ENCODE measurements at regions of chr12 and their contacts with region 1.

Region 1: GRCh38 chr12:113048716-113049127 is 7.8 kb upstream of the DTX1 start:
- DNase-seq: no peak
- H3K4me3 ChIP-seq: no peak overlapping the region
- CTCF ChIP-seq: peak; percentile 67

Region 2: DNA sequence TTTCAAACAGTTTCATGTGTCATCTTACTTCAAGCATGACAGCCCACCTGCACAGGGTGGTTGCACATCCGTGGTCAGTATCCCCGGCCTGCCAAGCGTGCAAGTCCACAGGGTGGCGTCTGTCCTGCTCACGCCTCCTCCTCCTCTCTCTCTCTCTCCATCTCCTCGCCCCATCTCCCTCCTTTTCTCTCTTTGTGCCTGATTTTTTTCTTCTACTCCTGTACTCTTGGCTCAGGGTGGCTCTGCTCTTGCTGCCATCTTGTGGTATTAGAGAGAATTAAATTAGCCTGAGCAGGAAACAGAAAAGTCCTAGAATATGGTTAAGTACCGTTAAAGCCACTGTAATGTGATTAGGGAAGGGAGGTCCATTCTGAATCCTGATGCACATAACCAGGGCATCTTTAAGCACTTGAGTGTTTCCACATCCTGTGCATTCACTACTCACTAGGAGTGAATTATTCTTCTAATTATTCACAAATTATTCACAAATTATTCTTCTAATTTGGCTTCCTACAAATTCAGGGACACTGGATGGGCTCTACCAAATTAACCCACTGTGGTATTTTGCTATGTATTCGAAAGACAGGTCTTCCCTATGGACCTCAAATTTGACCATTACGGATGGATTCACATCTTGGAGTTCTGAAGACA is 17.7 kb before region 1 on chr12:
- CTCF ChIA-PET with region 1: interaction called, 16 read pairs
- POLR2A ChIA-PET with region 1: no interaction called
- DNase-seq: peak; percentile 9
- H3K4me3 ChIP-seq: no peak overlapping the region
- CTCF ChIP-seq: peak; percentile 61

Region 3: GRCh38 chr12:113065126-113066007 is 16.6 kb after region 1 on chr12:
- CTCF ChIA-PET with region 1: interaction called, 14 read pairs
- POLR2A ChIA-PET with region 1: no interaction called
- DNase-seq: no peak
- H3K4me3 ChIP-seq: no peak overlapping the region
- CTCF ChIP-seq: no peak

Region 4: GRCh38 chr12:113096675-113097461 is 48.1 kb after region 1 on chr12:
- CTCF ChIA-PET with region 1: interaction called, 11 read pairs
- POLR2A ChIA-PET with region 1: no interaction called
- DNase-seq: no peak
- H3K4me3 ChIP-seq: no peak overlapping the region
- CTCF ChIP-seq: no peak

Region 5: GRCh38 chr12:113152835-113153814 is 104.4 kb after region 1 on chr12:
- CTCF ChIA-PET with region 1: interaction called, 86 read pairs
- POLR2A ChIA-PET with region 1: no interaction called
- DNase-seq: no peak
- H3K4me3 ChIP-seq: peak overlapping the region; percentile 42
- CTCF ChIP-seq: peak; percentile 61

Region 6: GRCh38 chr12:113161414-113162016 is 112.8 kb after region 1 on chr12:
- CTCF ChIA-PET with region 1: interaction called, 12 read pairs
- POLR2A ChIA-PET with region 1: no interaction called
- DNase-seq: no peak
- H3K4me3 ChIP-seq: no peak overlapping the region
- CTCF ChIP-seq: no peak

Region 7: GRCh38 chr12:113174461-113175384 is 126.0 kb after region 1 on chr12:
- CTCF ChIA-PET with region 1: interaction called, 157 read pairs
- POLR2A ChIA-PET with region 1: no interaction called
- DNase-seq: no peak
- H3K4me3 ChIP-seq: no peak overlapping the region
- CTCF ChIP-seq: peak; percentile 97